ENCODE measurements at regions of chr6 and their contacts with region 1.

Region 1: DNA sequence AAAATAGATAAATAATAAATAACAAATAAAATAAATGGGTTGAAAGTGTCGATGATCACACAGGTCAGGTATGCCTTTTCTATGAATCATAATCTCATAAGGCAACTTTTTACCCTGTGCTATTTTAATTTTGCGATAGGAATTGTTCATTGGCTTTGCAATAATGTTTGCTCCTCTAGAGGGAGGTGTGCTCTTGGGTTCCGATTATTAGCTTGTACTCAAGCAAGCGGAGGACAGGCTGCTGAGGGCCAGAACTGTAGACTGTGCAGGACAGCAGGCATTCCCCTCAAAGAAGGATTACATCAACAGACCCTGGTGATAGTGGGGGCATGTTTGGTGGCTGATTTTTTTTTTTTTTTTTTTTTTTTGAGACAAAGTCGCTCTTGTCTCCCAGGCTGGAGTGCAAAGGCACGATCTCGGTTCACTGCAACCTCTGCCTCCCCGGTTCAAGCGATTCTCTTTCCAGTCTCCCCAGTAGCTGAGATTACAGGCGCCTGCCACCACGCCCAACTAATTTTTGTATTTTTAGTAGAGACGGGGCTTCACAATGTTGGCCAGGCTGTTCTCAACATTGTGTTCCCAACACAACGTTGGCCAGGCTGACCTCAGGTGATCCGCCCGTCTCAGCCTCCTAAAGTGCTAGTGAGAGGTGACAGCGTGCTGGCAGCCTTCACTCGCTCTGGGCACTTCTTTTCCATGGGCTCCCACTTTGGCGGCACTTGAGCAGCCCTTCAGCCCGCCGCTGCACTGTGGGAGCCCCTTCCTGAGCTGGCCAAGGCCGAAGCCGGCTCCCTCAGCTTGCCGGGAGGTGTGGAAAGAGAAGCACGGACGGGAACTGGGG is 35.6 kb downstream of the RIOK1 start:
- DNase-seq: peak; percentile 43 to 50
- H3K4me3 ChIP-seq: no peak overlapping the region
- H3K27ac ChIP-seq: no peak overlapping the region
- H3K4me1 ChIP-seq: no peaks in the 10 kb centered on the region
- H3K27me3 ChIP-seq: no peaks in the 10 kb centered on the region
- CTCF ChIP-seq: peak in 5 of 6 experiments; percentile 28 to 81 (median 63)
- POLR2A ChIP-seq: no peak

Region 2: DNA sequence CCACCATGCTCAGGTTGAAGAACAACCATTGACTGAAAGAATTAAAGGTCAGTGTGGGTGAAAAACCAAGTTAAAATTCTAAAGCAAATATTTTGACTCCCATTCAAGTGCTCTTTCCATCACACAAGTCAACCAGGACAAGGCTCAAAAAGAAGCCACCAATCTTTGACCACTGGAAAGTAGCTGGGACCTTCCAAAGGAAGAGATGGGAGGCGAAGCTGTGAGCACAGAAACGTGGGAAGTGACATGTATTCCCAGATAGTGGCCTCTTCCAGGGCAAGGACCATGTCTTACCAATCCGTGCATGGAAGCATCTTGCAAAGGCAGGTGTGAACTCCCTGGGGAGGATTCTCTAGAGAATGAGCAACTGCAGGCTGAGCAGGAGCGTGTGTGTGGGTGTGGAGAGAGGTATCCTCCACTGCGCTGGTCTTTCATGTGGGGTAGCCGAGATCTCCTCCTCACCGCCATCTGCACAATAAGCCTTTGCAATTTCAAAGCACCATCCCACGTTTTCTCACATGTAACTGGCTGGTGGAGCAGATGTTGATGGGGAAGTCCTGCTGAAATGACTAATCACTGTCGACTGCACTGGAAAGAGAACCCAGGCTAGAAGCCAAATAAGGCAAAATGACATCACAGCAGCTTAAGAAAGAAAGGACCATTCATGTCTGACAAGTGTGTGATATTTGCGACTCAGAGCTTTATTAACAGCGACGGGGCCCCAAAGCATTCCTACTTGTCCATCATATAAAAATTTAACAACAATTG is 506.8 kb before region 1 on chr6:
- intact Hi-C with region 1: no loop called
- DNase-seq: no peak
- H3K4me3 ChIP-seq: no peak overlapping the region
- H3K27ac ChIP-seq: no peak overlapping the region
- H3K4me1 ChIP-seq: peaks cover 31 to 40% of the 10 kb centered on the region in 2 donors
- H3K27me3 ChIP-seq: no peaks in the 10 kb centered on the region
- CTCF ChIP-seq: no peak
- POLR2A ChIP-seq: no peak

Region 3: GRCh38 chr6:7314414-7314813 is 110.8 kb before region 1 on chr6:
- intact Hi-C with region 1: no loop called
- DNase-seq: no peak
- H3K4me3 ChIP-seq: no peak overlapping the region
- H3K27ac ChIP-seq: no peak overlapping the region
- H3K4me1 ChIP-seq: peaks cover 7 to 13% of the 10 kb centered on the region in 2 donors
- H3K27me3 ChIP-seq: no peaks in the 10 kb centered on the region
- CTCF ChIP-seq: no peak
- POLR2A ChIP-seq: no peak

Region 4: DNA sequence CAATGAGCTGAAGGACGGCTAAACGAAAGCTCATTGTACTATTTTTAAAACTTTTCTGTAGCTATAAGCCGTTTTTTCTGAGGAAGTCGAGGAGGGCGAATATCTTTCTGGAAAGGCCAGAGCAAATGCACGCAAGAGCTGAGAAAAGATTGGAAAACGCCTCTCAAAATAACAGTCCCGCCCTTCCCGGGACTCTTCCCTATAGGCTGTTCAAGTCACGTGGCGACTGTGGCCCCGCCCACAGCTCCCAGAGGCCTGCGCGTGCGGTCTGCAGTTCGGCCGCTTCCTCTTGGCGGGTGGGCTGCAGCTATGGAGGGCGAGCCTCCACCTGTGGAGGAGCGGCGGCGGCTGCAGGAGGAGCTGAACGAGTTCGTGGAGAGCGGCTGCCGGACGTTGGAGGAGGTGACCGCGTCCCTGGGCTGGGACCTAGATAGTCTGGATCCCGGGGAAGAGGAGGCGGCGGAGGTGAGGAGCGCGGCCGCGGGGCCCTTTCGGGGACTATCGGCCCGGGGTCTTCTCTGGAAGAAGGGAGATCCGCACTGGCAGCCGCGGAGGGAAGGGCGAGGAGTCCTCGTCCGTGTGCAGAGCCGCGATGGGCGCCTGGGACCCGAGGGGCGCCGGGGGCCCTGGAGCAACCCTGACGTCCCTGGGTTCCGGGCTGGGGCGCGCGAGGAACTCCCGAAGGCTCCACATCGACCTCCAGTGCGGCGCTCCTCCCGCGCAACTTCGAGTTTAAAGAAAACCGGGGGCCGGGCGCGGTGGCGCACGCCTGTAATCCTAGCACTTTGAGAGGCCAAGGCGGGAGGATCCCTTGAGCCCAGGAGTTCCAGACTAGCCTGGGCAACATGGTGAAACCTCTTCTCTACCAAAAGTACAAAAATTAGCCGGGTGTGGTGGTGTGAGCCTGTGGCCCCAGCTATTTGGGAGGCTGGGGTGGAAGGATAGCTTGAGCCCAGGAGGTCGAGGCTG is 165.0 kb after region 1 on chr6 and contains the start of gene SNRNP48:
- intact Hi-C with region 1: loop called (anchors 10 kb)
- DNase-seq: peak; percentile 97 to 98
- H3K4me3 ChIP-seq: peak within 1 kb of the TSS; percentile 56 to 93 (median 89)
- H3K27ac ChIP-seq: peak within 1 kb of the TSS in 2 of 3 donors; percentile 50 to 58
- H3K4me1 ChIP-seq: peaks cover 0 to 20% of the 10 kb centered on the region in 2 donors
- H3K27me3 ChIP-seq: no peaks in the 10 kb centered on the region
- CTCF ChIP-seq: no peak
- POLR2A ChIP-seq: peak in 1 of 2 donors; percentile 86
- total RNA-seq, gene SNRNP48: 11.2 to 28.8 (median 20.1) TPM

Region 5: GRCh38 chr6:7615611-7616383 is 190.6 kb after region 1 on chr6:
- intact Hi-C with region 1: loop called (anchors 10 kb)
- DNase-seq: peak; percentile 35 to 43
- H3K4me3 ChIP-seq: no peak overlapping the region
- H3K27ac ChIP-seq: no peak overlapping the region
- H3K4me1 ChIP-seq: peaks cover 0 to 10% of the 10 kb centered on the region in 2 donors
- H3K27me3 ChIP-seq: no peaks in the 10 kb centered on the region
- CTCF ChIP-seq: peak in 5 of 6 experiments; percentile 41 to 87 (median 82)
- POLR2A ChIP-seq: no peak

Measured in thyroid gland (tissue), 4 donors.